ENCODE measurements at regions of chr7 and their contacts with region 1.

Region 1: DNA sequence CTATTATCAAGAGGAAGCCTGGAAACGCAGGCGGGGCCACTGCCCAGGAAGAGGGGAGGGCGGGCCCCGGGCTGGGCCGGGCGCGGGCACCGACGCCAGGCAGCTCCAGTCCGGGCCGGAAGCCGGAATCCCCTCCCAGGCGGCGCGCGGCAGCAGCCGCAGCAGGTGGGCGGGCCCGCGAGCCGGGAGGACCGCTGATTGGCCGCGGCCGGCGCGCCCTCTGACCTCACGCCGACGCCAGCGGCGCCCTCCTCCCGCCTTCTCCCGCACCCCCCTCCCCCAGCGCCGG is 438 bp downstream of the BCL7B start:
- DNase-seq: peak; percentile 56
- ATAC-seq: peak; percentile 95
- H3K4me3 ChIP-seq: peak overlapping the region; percentile 57 to 99
- H3K27ac ChIP-seq: peak overlapping the region; percentile 52
- H3K4me1 ChIP-seq: peaks cover 11% of the 10 kb centered on the region
- H3K27me3 ChIP-seq: no peaks in the 10 kb centered on the region
- CTCF ChIP-seq: no peak

Region 2: DNA sequence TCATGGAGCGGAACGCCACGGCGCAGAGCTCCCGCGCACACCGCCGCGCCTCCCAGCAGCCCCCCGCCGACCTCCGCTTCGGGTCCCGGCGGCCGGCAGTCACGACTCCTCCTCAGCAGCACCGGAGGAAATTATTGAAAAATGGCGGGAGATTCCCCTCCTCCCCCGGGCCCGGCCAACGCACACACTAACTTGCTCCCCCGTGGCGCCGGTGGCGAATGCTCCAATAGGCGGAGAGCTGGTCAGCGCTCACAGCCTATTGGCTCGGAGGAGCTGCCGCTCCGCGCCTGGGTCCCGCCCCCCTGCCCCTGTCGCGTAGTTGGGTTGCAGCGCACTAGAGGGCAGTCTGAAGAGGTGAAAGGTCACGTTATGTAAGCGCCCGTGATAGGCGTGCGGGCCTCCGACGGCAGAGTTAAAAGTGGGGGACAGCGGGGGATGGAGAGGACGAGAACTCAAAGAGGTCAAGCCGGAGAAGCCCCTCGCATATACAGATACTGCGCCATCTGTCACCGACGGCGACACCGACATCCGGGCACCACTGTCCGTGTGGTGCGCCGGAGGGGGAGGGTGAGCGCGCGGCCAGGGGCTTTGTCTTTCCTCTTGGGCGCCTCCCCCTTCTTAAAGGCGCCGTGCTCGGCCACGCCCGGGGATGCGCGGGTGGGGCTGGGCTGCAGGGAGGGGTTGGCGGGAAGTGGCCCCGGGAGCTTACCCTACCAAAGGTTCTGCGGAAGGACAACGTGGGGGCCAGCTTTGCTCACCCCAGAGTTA is 34.8 kb before region 1 on chr7 and contains the start of gene BAZ1B:
- CTCF ChIA-PET with region 1: no interaction called
- POLR2A ChIA-PET with region 1: interaction called, 6 read pairs
- in situ Hi-C with region 1: no loop called
- intact Hi-C with region 1: loop called (anchors 5 kb)
- DNase-seq: peak; percentile 96
- ATAC-seq: peak; percentile 96
- H3K4me3 ChIP-seq: peak within 1 kb of the TSS; percentile 89 to 90
- H3K27ac ChIP-seq: peak within 1 kb of the TSS; percentile 96
- H3K4me1 ChIP-seq: peaks cover 25% of the 10 kb centered on the region
- H3K27me3 ChIP-seq: no peaks in the 10 kb centered on the region
- CTCF ChIP-seq: no peak
- total RNA-seq, gene BAZ1B: 107 TPM